Cardiac septum (tissue), 1 donor: ENCODE measurements at regions of chr2 and their contacts with region 1.

Region 1: DNA sequence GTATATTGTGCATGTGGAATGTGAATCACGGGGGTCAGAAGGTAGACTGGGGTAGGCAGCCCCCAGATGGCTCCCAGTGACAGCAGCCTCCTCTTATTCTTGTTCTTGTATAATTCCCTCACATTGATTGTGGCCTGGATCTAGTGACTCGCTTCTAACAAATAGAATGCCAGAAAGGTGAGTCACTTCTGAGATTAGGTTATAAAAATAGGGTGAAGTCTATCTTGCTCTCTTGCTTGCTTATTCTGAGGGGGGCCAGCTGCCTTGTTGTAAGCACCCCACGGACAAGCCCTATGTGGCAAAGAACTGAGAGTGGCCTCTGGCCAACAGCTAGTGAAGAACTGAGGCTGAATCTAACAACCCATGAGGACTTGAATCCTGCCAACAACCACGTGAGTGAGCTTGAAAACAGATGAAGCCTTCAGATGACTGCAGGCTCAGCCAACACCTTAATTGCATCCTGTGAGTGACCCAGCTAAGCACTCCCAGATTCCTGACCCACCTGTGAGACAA is 15.6 kb upstream of the RMND5A start:
- DNase-seq: peak; percentile 78

Region 2: DNA sequence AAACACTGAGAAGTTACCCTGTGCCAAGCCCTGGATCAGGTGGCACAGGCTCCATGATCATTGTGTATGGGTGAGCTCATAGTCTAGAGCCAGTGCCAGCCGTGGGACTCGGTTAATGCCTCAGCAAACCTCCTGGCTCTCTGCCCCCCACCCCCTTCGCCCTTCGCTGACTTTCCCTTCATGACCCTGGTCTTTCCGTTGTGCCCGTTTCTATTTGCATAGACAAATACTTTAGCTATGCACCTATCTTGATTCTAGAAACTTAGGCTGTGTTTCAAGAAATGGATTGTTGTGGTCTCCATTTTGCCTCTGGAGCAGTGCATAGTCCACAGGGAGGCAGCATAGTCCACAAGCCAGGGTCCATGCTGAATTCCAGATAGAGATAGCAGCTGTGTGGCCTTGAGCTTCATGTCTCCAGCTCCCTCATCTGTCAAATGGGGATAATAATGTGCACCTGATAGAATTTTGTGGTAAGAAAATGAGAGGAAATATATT is 308.2 kb before region 1 on chr2:
- intact Hi-C with region 1: loop called (anchors 10 kb)
- DNase-seq: no peak

Region 3: GRCh38 chr2:86487062-86487461 is 217.5 kb before region 1 on chr2:
- intact Hi-C with region 1: no loop called
- DNase-seq: no peak

Region 4: GRCh38 chr2:86500325-86501083 is 204.0 kb before region 1 on chr2:
- intact Hi-C with region 1: no loop called
- DNase-seq: no peak

Region 5: GRCh38 chr2:86592547-86593230 is 111.8 kb before region 1 on chr2:
- intact Hi-C with region 1: loop called (anchors 10 kb)
- DNase-seq: no peak

Region 6: DNA sequence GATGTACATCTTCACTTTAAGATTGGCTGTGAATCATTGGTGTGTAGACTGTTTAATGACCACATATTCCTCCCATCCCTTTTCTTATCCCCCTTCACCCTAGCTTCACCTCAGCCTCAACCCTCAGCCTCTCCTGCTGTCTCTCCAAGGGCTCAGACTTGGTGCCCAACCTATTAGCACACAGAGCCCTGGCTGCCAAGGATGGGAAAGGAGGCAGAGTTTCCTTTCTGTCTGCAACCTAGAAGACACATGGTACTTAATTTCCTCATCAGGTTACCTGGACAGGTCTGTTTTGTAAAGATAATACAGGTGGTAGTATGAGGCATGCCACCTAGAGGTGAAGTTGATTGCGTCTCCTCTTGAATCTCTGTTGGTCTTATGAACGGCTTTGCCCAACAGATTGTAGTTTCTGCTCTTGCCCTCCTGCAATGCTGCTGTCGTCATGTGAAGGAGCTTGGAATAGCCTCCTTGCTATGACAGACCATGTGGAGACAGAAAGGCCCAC is 29.0 kb before region 1 on chr2:
- intact Hi-C with region 1: loop called (anchors 2 kb)
- DNase-seq: no peak

Region 7: GRCh38 chr2:86825693-86826381 is 121.3 kb after region 1 on chr2:
- intact Hi-C with region 1: no loop called
- DNase-seq: no peak